ENCODE measurements at regions of chrX and their contacts with region 1.

Region 1: GRCh38 chrX:21839334-21840192 is at the start of gene MBTPS2:
- DNase-seq: peak; percentile 94
- H3K4me3 ChIP-seq: peak within 1 kb of the TSS; percentile 67 to 80 (median 69)
- H3K27ac ChIP-seq: peak within 1 kb of the TSS; percentile 75 to 84 (median 80)
- H3K4me1 ChIP-seq: peaks cover 3 to 17% (median 11%) of the 10 kb centered on the region in 4 donors
- H3K27me3 ChIP-seq: no peaks in the 10 kb centered on the region
- CTCF ChIP-seq: peak; percentile 9 to 15 (median 12)
- EP300 ChIP-seq: no peak
- POLR2A ChIP-seq: peak; percentile 7
- total RNA-seq, gene MBTPS2: 7.5 to 10.8 (median 8.4) TPM

Region 2: DNA sequence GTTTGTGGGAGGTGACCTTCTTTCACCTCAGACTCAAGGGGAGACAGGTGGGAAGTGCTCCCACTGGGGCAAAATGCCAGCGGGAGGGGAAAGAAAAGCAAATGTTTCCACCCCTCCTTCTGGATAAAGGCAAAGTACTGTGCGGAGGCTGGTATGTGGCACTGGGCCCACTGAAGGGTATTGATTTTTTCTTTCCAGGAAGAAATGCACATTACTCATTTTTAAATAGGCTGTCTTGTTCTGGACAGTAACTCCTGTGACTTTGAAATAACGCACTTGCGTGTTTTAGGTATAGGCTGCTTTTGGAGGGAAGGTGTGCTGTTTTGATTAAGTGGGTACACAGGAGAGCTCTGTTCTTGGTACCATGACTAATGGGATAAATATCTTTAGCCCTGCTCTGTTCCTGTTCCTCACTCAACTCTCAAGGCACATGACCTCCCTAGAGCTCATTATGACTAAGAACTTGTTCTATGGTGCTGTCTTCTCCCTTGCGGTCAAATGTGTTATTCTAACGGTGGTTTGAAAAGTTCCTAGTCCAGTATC is 40.8 kb before region 1 on chrX:
- intact Hi-C with region 1: no loop called
- DNase-seq: no peak
- H3K4me3 ChIP-seq: no peak overlapping the region
- H3K27ac ChIP-seq: no peak overlapping the region
- H3K4me1 ChIP-seq: peaks cover 0 to 19% (median 12%) of the 10 kb centered on the region in 4 donors
- H3K27me3 ChIP-seq: no peaks in the 10 kb centered on the region
- CTCF ChIP-seq: no peak
- EP300 ChIP-seq: no peak
- POLR2A ChIP-seq: no peak

Region 3: GRCh38 chrX:21932292-21932996 is 92.9 kb after region 1 on chrX:
- intact Hi-C with region 1: loop called (anchors 10 kb)
- DNase-seq: no peak
- H3K4me3 ChIP-seq: no peak overlapping the region
- H3K27ac ChIP-seq: peak overlapping the region in 1 of 4 donors; percentile 13
- H3K4me1 ChIP-seq: no peaks in the 10 kb centered on the region
- H3K27me3 ChIP-seq: no peaks in the 10 kb centered on the region
- CTCF ChIP-seq: no peak
- EP300 ChIP-seq: no peak
- POLR2A ChIP-seq: no peak

Region 4: GRCh38 chrX:21972721-21973120 is 133.2 kb after region 1 on chrX:
- intact Hi-C with region 1: loop called (anchors 10 kb)
- DNase-seq: no peak
- H3K4me3 ChIP-seq: no peak overlapping the region
- H3K27ac ChIP-seq: no peak overlapping the region
- H3K4me1 ChIP-seq: peaks cover 0 to 18% (median 12%) of the 10 kb centered on the region in 4 donors
- H3K27me3 ChIP-seq: no peaks in the 10 kb centered on the region
- CTCF ChIP-seq: peak in 1 of 3 experiments; percentile 3
- EP300 ChIP-seq: no peak
- POLR2A ChIP-seq: no peak

Region 5: DNA sequence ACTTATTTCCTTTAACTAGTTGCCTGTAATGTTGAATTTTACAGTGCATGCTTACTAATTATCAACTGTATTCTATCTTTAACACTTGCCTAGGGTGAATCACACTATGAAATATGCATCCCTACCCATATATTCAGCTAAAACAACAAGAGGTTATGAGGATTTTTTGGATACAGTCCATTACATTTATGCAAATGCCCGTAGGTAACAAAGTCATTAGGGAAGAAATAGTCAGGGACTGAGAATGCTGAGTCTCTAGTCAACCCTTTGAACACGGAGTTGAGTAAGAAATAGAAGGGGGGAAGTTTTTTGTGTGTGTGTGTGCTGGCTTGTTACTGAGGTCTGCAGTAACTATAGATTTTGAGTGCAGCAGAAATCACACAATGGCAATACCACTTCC is 407.1 kb after region 1 on chrX:
- intact Hi-C with region 1: no loop called
- DNase-seq: no peak
- H3K4me3 ChIP-seq: no peak overlapping the region
- H3K27ac ChIP-seq: no peak overlapping the region
- H3K4me1 ChIP-seq: no peaks in the 10 kb centered on the region
- H3K27me3 ChIP-seq: no peaks in the 10 kb centered on the region
- CTCF ChIP-seq: no peak
- EP300 ChIP-seq: no peak
- POLR2A ChIP-seq: no peak

Measured in esophagus muscularis mucosa (tissue), 4 donors.